Heart right ventricle (tissue), 16 donors: ENCODE measurements at regions of chr3 and their contacts with region 1.

Region 1: GRCh38 chr3:11335056-11335608 is 62.9 kb downstream of the ATG7 start:
- DNase-seq: peak in 1 of 2 donors; percentile 26
- ATAC-seq: peak in 7 of 8 donors; percentile 44 to 72 (median 57)
- H3K4me3 ChIP-seq: no peak overlapping the region
- H3K27ac ChIP-seq: no peak overlapping the region
- H3K4me1 ChIP-seq: no peaks in the 10 kb centered on the region
- H3K27me3 ChIP-seq: no peaks in the 10 kb centered on the region
- CTCF ChIP-seq: peak; percentile 17 to 73 (median 68)

Region 2: GRCh38 chr3:10945683-10946287 is 389.3 kb before region 1 on chr3:
- intact Hi-C with region 1: loop called in 2 of 10 experiments (anchors 5 to 10 kb)
- DNase-seq: peak; percentile 27 to 69
- ATAC-seq: peak; percentile 72 to 85 (median 82)
- H3K4me3 ChIP-seq: no peak overlapping the region
- H3K27ac ChIP-seq: no peak overlapping the region
- H3K4me1 ChIP-seq: peaks cover 0 to 8% (median 0%) of the 10 kb centered on the region in 9 donors
- H3K27me3 ChIP-seq: peaks cover 0 to 56% (median 19%) of the 10 kb centered on the region in 7 donors
- CTCF ChIP-seq: peak; percentile 65 to 96 (median 85)

Region 3: GRCh38 chr3:11155341-11156025 is 179.6 kb before region 1 on chr3:
- intact Hi-C with region 1: loop called in 7 of 10 experiments (anchors 5 to 10 kb)
- DNase-seq: peak; percentile 55 to 65
- ATAC-seq: peak; percentile 73 to 91 (median 88)
- H3K4me3 ChIP-seq: peak overlapping the region in 9 of 10 donors; percentile 26 to 62 (median 56)
- H3K27ac ChIP-seq: peak overlapping the region in 6 of 10 donors; percentile 11 to 59 (median 36)
- H3K4me1 ChIP-seq: peaks cover 0 to 32% (median 10%) of the 10 kb centered on the region in 9 donors
- H3K27me3 ChIP-seq: peaks cover 0 to 46% (median 27%) of the 10 kb centered on the region in 7 donors
- CTCF ChIP-seq: peak; percentile 34 to 81 (median 67)

Region 4: DNA sequence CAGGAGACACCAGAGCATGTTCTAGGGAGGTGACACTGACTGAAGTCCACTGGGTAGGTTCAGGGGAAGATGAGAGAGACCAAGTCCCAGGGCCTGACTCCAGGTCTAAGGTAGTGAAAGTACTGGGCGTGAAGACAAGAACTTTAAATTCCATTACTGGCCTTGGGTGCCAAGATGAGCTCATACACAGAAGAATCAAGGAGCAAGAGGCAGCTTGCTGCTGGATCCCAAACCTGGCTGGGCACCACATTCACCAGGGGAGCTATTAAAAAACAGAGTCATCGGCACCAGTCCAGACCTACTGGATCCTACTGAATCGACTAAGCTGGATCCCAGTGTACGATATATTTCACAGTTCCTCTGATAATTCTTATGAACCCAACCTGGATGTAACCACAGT is 105.0 kb before region 1 on chr3:
- intact Hi-C with region 1: loop called in 5 of 10 experiments (anchors 5 to 10 kb)
- DNase-seq: no peak
- ATAC-seq: no peak
- H3K4me3 ChIP-seq: no peak overlapping the region
- H3K27ac ChIP-seq: no peak overlapping the region
- H3K4me1 ChIP-seq: peaks cover 0 to 34% (median 8%) of the 10 kb centered on the region in 9 donors
- H3K27me3 ChIP-seq: peaks cover 0 to 4% (median 0%) of the 10 kb centered on the region in 7 donors
- CTCF ChIP-seq: no peak

Region 5: GRCh38 chr3:11282250-11283138 is 52.6 kb before region 1 on chr3:
- intact Hi-C with region 1: no loop called
- DNase-seq: peak; percentile 24 to 49
- ATAC-seq: peak; percentile 81 to 93 (median 90)
- H3K4me3 ChIP-seq: peak overlapping the region in 2 of 10 donors; percentile 0 to 13
- H3K27ac ChIP-seq: peak overlapping the region in 9 of 10 donors; percentile 13 to 78 (median 49)
- H3K4me1 ChIP-seq: peaks cover 10 to 72% (median 30%) of the 10 kb centered on the region in 9 donors
- H3K27me3 ChIP-seq: no peaks in the 10 kb centered on the region
- CTCF ChIP-seq: no peak

Region 6: DNA sequence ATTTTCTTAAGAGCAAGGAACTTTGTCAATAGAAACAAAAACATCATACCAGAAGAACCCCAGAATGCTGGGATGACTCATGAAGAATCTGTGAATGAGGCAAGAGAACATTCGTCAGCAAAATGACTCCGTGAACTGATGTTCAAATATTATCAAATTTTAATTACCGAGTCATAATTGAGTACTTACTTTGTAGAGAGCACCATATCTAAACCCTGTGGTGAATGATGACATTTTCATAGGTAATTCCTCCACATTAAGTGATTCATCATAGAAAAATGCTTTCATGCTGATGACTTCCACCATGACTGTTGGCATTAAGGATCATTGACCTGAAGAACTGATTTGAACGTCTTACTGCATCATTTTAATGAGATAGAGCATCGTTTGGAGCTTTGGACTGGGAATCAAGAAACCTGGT is 1010.0 kb after region 1 on chr3:
- intact Hi-C with region 1: no loop called
- DNase-seq: no peak
- ATAC-seq: no peak
- H3K4me3 ChIP-seq: no peak overlapping the region
- H3K27ac ChIP-seq: no peak overlapping the region
- H3K4me1 ChIP-seq: peaks cover 0 to 13% (median 3%) of the 10 kb centered on the region in 9 donors
- H3K27me3 ChIP-seq: no peaks in the 10 kb centered on the region
- CTCF ChIP-seq: no peak